ENCODE measurements at regions of chr1 and their contacts with region 1.

Region 1: GRCh38 chr1:110203021-110203661 is 7.0 kb upstream of the KCNC4 start:
- DNase-seq: peak in 1 of 2 experiments; percentile 81
- H3K4me3 ChIP-seq: no peak overlapping the region
- H3K27ac ChIP-seq: no peak overlapping the region
- H3K4me1 ChIP-seq: peaks cover 2 to 6% (median 4%) of the 10 kb centered on the region in 4 experiments; a peak in 5 of 7 replicates
- H3K27me3 ChIP-seq: no peaks in the 10 kb centered on the region
- CTCF ChIP-seq: peak; percentile 17 to 86 (median 76)
- EP300 ChIP-seq: no peak
- POLR2A ChIP-seq: no peak
- RAD21 ChIP-seq: peak; percentile 88 to 90

Region 2: DNA sequence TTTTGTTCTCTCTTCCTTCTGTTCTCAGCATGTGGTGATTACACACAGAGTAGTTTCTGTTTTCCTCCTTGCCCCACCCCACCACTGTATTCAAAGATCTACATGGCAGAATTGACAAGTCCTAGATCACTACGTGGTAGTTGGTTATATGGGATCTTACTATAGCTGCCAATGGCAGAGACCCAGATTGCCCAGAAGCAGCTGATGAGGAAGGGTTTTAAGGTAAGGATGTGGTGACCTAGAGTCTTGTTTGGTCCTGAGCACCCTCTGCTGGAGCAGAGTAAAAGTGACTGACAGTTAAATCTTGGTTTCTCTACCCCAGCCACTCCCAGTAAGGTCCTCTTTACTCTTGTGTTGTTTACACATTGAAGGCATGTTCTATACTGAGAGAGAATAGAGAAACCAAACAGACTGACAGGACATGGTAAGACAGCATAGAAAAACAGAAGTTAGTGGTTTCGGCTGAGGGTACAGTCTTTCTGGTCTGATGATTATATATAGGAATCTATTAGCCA is 191.6 kb before region 1 on chr1:
- CTCF ChIA-PET with region 1: no interaction called
- POLR2A ChIA-PET with region 1: no interaction called
- DNase-seq: peak in 1 of 2 experiments; percentile 49
- H3K4me3 ChIP-seq: no peak overlapping the region
- H3K27ac ChIP-seq: no peak overlapping the region
- H3K4me1 ChIP-seq: peaks cover 0 to 9% (median 5%) of the 10 kb centered on the region in 4 experiments; a peak in 3 of 7 replicates
- H3K27me3 ChIP-seq: no peaks in the 10 kb centered on the region
- CTCF ChIP-seq: peak; percentile 5 to 68 (median 47)
- EP300 ChIP-seq: no peak
- POLR2A ChIP-seq: no peak
- RAD21 ChIP-seq: peak; percentile 67 to 74

Region 3: GRCh38 chr1:110170766-110171733 is 32.1 kb before region 1 on chr1:
- CTCF ChIA-PET with region 1: interaction called, 18 read pairs
- POLR2A ChIA-PET with region 1: interaction called, 3 read pairs
- DNase-seq: no peak
- H3K4me3 ChIP-seq: no peak overlapping the region
- H3K27ac ChIP-seq: no peak overlapping the region
- H3K4me1 ChIP-seq: peaks cover 0 to 4% (median 0%) of the 10 kb centered on the region in 4 experiments; a peak in 2 of 7 replicates
- H3K27me3 ChIP-seq: no peaks in the 10 kb centered on the region; a peak in 1 of 7 replicates
- CTCF ChIP-seq: no peak
- EP300 ChIP-seq: no peak
- POLR2A ChIP-seq: no peak
- RAD21 ChIP-seq: no peak

Region 4: DNA sequence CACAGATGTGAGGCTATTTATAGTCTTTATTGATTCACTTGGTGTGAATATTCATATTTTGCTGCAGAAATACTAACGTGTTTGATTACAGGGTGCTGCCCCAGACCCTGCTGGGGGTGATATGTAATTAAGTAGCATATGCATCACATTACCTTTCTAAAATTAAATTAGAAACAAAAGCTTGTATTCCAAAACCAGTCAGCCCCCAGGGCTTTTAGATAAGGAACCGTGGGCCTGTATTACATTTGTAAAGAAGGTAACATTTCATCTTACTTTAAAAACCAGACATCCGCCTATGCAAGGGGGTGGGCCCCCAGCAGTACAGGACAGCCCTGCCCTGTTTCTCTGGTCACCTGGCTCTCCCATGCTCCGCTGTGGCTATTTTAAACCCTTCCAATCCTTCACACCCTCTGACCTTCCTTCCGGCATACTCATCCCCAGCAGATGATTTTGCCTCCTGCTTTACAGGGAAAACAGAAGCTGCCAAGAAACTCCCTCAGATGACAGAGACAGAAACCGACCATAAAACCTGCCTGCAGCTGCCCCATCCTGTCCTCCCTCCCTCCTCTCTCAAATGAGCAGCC is 15.0 kb before region 1 on chr1:
- CTCF ChIA-PET with region 1: interaction called, 33 read pairs
- POLR2A ChIA-PET with region 1: interaction called, 3 read pairs
- DNase-seq: no peak
- H3K4me3 ChIP-seq: no peak overlapping the region
- H3K27ac ChIP-seq: no peak overlapping the region
- H3K4me1 ChIP-seq: peaks cover 0 to 2% (median 0%) of the 10 kb centered on the region in 4 experiments; a peak in 1 of 7 replicates
- H3K27me3 ChIP-seq: no peaks in the 10 kb centered on the region
- CTCF ChIP-seq: no peak
- EP300 ChIP-seq: no peak
- POLR2A ChIP-seq: no peak
- RAD21 ChIP-seq: no peak

Region 5: DNA sequence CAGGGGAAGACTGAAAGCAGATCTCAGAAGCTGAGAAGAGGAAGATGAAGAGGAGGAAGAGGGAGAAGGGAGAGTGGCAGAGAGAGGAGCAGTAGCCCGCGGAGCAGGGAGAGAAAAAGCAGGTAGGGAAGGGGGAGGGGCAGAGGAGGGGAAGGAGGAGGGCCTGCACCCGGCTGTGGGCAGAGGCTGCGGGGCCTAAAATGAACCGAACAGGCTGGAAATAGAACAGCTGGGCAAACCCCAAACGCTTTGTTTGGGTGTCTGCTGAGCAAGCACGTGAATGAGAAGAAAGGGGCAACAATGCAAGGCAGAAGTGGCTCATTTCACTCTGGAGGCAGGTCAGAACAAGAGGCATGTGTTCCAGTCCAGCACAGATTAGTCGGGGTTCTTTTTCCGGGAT is 40.4 kb after region 1 on chr1:
- CTCF ChIA-PET with region 1: interaction called, 23 read pairs
- POLR2A ChIA-PET with region 1: no interaction called
- DNase-seq: no peak
- H3K4me3 ChIP-seq: no peak overlapping the region
- H3K27ac ChIP-seq: no peak overlapping the region
- H3K4me1 ChIP-seq: peaks cover 0 to 21% (median 14%) of the 10 kb centered on the region in 4 experiments; a peak in 6 of 7 replicates
- H3K27me3 ChIP-seq: no peaks in the 10 kb centered on the region; a peak in 3 of 7 replicates
- CTCF ChIP-seq: no peak
- EP300 ChIP-seq: no peak
- POLR2A ChIP-seq: no peak
- RAD21 ChIP-seq: no peak

Measured in H1 (cell line).